Activated CD4-positive, alpha-beta T cell treated with anti-CD3 and anti-CD28 coated beads, Interleukin-2, amount 10 ng/mL, durations not matched to agents 24 days and 14 days (primary cell): ENCODE measurements at regions of chr13 and their contacts with region 1.

Region 1: DNA sequence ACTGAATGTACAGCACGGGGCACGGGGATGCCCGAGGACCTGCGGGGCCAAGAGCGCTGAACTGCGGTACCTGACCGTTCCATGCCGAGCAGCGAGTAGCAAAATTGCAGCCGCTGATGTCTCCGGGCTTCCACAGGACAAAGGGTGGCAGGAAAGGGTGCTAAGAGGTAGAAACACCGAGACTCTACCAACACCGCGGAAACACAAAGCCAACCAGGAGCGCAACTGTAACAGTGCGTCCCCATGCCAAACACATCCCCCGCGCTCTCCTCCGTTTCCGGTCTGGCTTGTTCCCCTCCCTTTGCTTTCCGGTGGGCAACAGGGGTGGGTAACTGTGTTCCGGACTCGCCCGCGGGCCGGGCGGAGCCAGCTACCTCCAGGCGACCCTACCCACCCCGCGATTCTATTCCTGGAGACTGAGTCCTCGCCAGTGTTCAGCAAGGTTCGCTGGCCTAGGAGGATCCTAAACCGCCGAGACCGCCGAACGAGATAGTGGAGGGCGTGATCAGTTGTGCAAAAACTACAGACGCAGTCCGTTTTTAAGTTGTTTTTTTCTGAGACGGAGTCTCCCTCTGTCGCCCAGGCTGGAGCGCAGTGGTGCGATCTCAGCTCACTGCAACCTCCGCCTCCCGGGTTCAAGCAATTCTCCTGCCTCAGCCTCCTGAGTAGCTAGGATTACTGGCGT is 34.9 kb upstream of the NEK3 start:
- DNase-seq: peak; percentile 97
- H3K4me3 Mint-ChIP-seq: peak overlapping the region; percentile 96
- H3K27ac Mint-ChIP-seq: peak overlapping the region; percentile 98
- H3K4me1 Mint-ChIP-seq: peaks cover 22% of the 10 kb centered on the region
- H3K27me3 Mint-ChIP-seq: no peaks in the 10 kb centered on the region

Region 2: GRCh38 chr13:51825165-51825592 is 369.1 kb before region 1 on chr13:
- intact Hi-C with region 1: loop called (anchors 5 kb)
- DNase-seq: peak; percentile 79
- H3K4me3 Mint-ChIP-seq: peak overlapping the region; percentile 73
- H3K27ac Mint-ChIP-seq: peak overlapping the region; percentile 84
- H3K4me1 Mint-ChIP-seq: peaks cover 64% of the 10 kb centered on the region
- H3K27me3 Mint-ChIP-seq: peaks cover 3% of the 10 kb centered on the region

Region 3: GRCh38 chr13:52011632-52012511 is 182.5 kb before region 1 on chr13 and contains the start of gene ALG11:
- intact Hi-C with region 1: loop called (anchors 2 kb)
- DNase-seq: peak; percentile 100
- H3K4me3 Mint-ChIP-seq: peak within 1 kb of the TSS; percentile 99
- H3K27ac Mint-ChIP-seq: peak within 1 kb of the TSS; percentile 93
- H3K4me1 Mint-ChIP-seq: peaks cover 8% of the 10 kb centered on the region
- H3K27me3 Mint-ChIP-seq: peaks cover 34% of the 10 kb centered on the region
- total RNA-seq, gene ALG11: 26.7 and 28.0 TPM in 2 replicates

Region 4: DNA sequence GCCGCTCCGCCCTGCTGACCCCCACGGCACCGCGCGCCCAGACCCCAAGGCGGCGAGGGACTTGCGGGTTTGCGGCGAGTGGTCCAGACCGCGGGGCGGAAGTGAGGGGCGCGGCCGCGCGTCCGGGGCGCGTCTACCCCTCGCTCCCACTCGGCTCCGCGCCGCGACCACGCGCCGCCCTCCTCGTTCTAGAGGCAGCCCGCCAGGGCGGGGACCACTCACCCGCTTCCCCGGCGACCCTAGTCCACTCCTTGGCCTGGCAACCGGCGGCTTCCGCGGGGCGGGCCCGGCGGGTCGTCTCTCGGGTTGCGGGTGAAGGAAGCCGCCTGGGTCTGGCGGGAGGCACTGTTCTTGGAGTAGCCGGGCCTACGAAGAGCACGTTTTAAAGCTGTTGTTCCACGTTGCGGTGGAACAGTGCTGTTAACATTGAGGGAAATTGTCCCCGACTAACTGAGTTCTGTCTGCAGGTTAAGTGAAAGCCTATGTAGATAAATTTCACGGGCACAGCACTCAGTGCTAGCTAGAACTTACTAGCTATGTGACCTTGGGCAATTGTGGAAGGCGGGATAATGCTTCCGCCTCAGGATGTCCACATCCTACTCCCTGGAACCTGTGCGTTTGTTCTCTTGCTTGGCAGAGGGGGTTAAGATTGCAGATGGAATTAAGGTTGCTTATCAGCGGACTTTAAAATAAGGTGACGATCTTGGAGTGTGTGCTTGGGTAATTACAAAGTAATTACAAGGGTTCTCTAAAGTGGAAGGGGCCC is 34.8 kb before region 1 on chr13 and contains the start of gene NEK3:
- intact Hi-C with region 1: loop called (anchors 1 kb)
- DNase-seq: peak; percentile 90
- H3K4me3 Mint-ChIP-seq: peak within 1 kb of the TSS; percentile 86
- H3K27ac Mint-ChIP-seq: peak within 1 kb of the TSS; percentile 81
- H3K4me1 Mint-ChIP-seq: peaks cover 41% of the 10 kb centered on the region
- H3K27me3 Mint-ChIP-seq: no peaks in the 10 kb centered on the region
- total RNA-seq, gene NEK3: 7.1 and 10.4 TPM in 2 replicates

Region 5: DNA sequence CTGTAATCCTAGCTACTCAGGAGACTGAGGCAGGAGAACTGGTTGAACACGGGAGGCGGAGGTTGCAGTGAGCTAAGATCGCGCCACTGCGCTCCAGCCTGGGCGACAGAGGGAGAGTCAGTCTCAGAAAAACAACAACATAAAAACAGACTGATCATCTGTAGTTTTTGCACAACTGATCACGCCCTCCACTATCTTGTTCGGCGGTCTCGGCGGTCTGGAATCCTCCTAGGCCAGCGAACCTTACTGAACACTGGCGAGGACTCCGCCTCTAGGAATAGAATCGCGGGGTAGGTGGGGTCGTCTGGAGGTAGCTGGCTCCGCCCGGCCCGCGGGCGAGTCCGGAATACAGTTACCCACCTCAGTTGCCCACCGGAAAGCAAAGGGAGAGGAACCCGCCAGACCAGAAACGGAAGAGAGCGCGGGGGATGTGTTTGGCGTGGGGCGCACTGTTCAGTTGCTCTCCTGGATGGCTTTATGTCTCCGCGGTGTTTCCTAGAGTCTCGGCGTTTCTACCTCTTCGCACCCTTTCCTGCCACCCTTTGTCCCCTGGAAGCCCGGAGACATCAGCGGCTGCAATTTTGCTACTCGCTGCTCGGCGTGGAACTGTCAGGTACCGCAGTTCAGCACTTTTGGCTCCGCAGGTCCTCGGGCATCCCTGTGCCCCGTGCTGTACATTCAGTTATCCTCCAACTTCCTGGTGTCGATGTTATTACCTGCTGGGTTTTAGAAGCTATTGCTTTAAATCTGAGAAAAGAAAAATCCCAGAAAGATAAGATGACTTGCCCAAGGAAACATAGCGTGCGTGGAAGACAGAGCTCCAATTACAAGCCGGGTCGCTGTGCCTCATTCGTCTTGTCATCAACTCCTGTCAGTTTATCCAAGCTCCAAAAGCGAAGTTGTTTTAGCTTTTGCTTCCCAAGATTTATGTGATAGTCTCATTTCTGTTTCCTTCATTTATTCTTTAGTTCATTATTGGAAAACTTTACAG is 423.0 kb after region 1 on chr13:
- intact Hi-C with region 1: loop called (anchors 10 kb)
- DNase-seq: peak; percentile 95
- H3K4me3 Mint-ChIP-seq: peak overlapping the region; percentile 94
- H3K27ac Mint-ChIP-seq: peak overlapping the region; percentile 94
- H3K4me1 Mint-ChIP-seq: peaks cover 14% of the 10 kb centered on the region
- H3K27me3 Mint-ChIP-seq: peaks cover 9% of the 10 kb centered on the region